HEK293 (cell line): ENCODE measurements at regions of chr17 and their contacts with region 1.

Region 1: GRCh38 chr17:979538-980405 is at the start of gene NXN:
- H3K4me3 ChIP-seq: peak within 1 kb of the TSS; percentile 85
- H3K27ac ChIP-seq: peak within 1 kb of the TSS; percentile 76; the same call in 1 of the 2 replicates
- H3K4me1 ChIP-seq: peaks cover 9% of the 10 kb centered on the region; the same call in 1 of the 2 replicates
- CTCF ChIP-seq: peak; percentile 50

Region 2: DNA sequence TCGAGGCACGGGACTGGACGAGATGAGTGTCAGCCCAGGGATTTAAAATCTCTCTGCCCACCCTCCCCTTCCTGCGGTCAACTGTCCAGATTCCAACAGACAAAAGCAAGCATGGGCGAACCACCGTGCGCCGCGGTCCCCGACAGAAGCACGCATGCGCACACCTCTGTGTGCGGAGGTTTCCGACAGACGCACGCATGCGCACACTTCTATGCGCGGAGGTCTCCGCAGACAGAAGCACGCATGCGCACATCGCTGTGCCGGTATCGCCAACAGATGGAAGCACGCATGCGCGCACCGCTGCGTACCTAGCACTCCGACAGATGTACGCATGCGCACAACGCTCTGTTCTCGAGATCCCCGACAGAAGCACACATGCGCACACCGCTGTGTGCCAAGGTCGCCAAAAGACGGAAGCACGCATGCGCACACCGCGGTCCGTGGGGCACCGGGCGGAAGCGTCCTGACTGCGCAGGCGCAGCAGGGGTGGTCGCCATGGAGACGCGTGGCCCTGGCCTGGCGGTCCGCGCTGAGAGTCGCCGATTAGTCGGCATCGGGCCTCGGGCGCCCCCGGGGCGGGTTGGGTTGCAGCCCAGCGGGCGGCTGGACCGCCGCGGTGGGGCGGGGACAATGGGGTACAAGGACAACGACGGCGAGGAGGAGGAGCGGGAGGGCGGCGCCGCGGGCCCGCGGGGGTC is 569.8 kb before region 1 on chr17:
- CTCF ChIA-PET with region 1: interaction called, 19 read pairs
- POLR2A ChIA-PET with region 1: interaction called, 3 read pairs
- H3K4me3 ChIP-seq: peak overlapping the region; percentile 45
- H3K27ac ChIP-seq: peak overlapping the region; percentile 70; the same call in 1 of the 2 replicates
- H3K4me1 ChIP-seq: peaks cover 6% of the 10 kb centered on the region
- CTCF ChIP-seq: peak; percentile 76

Region 3: GRCh38 chr17:752002-752619 is 227.7 kb before region 1 on chr17 and contains the start of gene GEMIN4:
- CTCF ChIA-PET with region 1: interaction called, 10 read pairs
- POLR2A ChIA-PET with region 1: no interaction called
- H3K4me3 ChIP-seq: peak within 1 kb of the TSS; percentile 65
- H3K27ac ChIP-seq: peak within 1 kb of the TSS; percentile 90
- H3K4me1 ChIP-seq: peaks cover 3% of the 10 kb centered on the region; the same call in 1 of the 2 replicates
- CTCF ChIP-seq: peak; percentile 99

Region 4: DNA sequence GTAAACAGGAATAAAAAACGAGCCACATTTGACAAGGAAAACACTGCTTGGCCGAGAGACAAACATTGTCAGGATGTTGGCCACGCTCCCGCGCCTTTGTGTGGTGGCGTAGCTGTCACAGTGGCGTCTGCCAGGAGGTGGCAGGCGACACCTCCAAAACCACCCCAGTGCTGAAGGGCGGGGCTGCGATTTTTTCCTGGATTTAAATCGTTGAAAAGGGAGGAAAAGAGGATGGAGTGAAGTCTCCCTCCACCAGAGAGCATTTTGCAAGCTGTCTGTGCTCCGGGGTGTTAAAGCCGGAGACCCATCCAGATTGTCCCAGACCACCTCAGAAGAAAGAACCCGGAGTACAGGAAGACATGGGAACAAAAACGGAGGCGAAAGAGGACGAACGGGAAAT is 184.9 kb before region 1 on chr17:
- CTCF ChIA-PET with region 1: interaction called, 173 read pairs
- POLR2A ChIA-PET with region 1: interaction called, 33 read pairs
- H3K4me3 ChIP-seq: no peak overlapping the region
- H3K27ac ChIP-seq: no peak overlapping the region
- H3K4me1 ChIP-seq: no peaks in the 10 kb centered on the region
- CTCF ChIP-seq: peak; percentile 93

Region 5: GRCh38 chr17:927611-928461 is 51.9 kb before region 1 on chr17:
- CTCF ChIA-PET with region 1: interaction called, 12 read pairs
- POLR2A ChIA-PET with region 1: interaction called, 20 read pairs
- H3K4me3 ChIP-seq: peak overlapping the region; percentile 22
- H3K27ac ChIP-seq: peak overlapping the region; percentile 63
- H3K4me1 ChIP-seq: peaks cover 12% of the 10 kb centered on the region
- CTCF ChIP-seq: no peak

Region 6: DNA sequence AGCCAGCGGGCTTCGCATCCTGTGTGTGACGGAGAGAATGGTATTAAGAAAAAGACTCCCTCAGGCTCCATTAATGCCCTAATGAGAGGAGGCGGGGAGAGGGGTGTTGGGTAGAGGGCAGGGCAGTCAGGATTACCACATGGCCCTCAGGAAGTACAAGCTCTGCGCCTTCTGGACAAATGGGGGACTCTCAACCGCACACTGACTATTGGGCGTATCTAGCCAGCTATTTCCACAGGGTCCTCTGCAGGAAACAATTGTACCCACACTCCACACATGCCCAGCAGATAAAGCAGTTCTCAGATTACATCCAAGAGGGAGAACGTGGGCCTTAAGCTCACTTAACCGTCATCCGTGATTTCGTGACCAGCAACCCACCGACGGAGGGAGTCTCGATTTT is 14.9 kb before region 1 on chr17:
- CTCF ChIA-PET with region 1: interaction called, 6 read pairs
- POLR2A ChIA-PET with region 1: interaction called, 11 read pairs
- H3K4me3 ChIP-seq: no peak overlapping the region
- H3K27ac ChIP-seq: peak overlapping the region; percentile 35
- H3K4me1 ChIP-seq: peaks cover 30% of the 10 kb centered on the region
- CTCF ChIP-seq: no peak